ENCODE measurements at regions of chr2 and their contacts with region 1.

Region 1: GRCh38 chr2:170873035-170873692 is 55.9 kb upstream of the GORASP2 start:
- DNase-seq: peak; percentile 56 to 70 (median 65)
- H3K4me3 ChIP-seq: no peak overlapping the region
- H3K4me3 Mint-ChIP-seq: peak overlapping the region; percentile 59 to 88 (median 80)
- H3K27ac ChIP-seq: no peak overlapping the region
- H3K27ac Mint-ChIP-seq: peak overlapping the region in 4 of 7 donors; percentile 19 to 84 (median 68)
- H3K4me1 ChIP-seq: peaks cover 12% of the 10 kb centered on the region
- H3K4me1 Mint-ChIP-seq: peaks cover 7 to 14% (median 11%) of the 10 kb centered on the region in 4 donors
- H3K27me3 ChIP-seq: no peaks in the 10 kb centered on the region
- H3K27me3 Mint-ChIP-seq: peaks cover 4 to 9% of the 10 kb centered on the region in 2 donors

Region 2: DNA sequence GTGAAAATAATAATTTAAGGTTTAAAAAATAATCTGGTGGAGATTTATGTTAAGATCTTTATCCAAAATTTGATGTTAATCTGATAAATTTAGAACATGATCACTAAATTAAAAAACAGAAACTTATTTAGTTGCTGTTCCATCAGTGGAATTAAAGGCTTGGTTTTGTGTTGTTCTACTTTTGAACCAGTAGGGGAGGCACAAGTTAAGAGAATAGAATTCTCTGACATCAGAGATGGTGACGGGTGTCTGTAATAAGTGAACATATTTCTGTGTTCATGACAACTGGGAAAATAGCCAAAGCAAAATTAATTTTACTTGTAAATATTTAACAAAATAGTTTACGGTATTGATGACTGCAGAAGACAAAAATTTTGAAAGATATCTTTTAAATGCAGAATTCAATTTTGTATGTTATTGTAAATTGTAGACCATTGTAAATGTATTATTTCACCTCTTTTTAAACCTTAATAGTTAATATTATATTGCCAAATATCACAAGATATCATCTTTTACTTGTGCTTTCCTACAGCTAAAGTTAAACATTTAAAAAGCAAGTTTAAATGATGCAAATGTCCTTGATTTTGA is 939.9 kb before region 1 on chr2:
- CTCF ChIA-PET with region 1: no interaction called
- POLR2A ChIA-PET with region 1: no interaction called
- intact Hi-C with region 1: loop called (anchors 10 kb)
- DNase-seq: peak in 1 of 5 donors; percentile 6
- H3K4me3 ChIP-seq: no peak overlapping the region
- H3K4me3 Mint-ChIP-seq: no peak overlapping the region
- H3K27ac ChIP-seq: no peak overlapping the region
- H3K27ac Mint-ChIP-seq: no peak overlapping the region
- H3K4me1 ChIP-seq: no peaks in the 10 kb centered on the region
- H3K4me1 Mint-ChIP-seq: peaks cover 0 to 4% (median 0%) of the 10 kb centered on the region in 4 donors
- H3K27me3 ChIP-seq: no peaks in the 10 kb centered on the region
- H3K27me3 Mint-ChIP-seq: no peaks in the 10 kb centered on the region

Region 3: DNA sequence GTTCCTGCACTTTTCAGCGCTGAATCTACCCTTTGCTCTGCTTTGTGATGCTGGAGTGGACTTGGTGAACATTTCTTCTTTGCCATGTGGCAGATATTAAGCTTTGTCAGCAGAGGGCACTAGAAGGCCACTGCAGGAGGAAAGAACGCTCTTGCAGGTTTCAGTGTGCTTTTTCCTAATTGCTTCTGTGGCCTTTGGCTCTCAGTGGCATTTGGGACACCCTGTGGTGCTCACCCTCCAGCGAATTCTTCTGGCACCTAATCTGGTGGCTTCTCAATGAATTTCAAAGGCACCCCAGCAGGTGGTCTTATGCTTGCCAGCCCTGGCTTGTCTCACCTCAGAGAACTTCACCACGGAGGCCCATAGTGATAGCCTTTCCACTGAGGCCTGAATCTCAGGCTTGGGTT is 548.5 kb before region 1 on chr2:
- CTCF ChIA-PET with region 1: interaction called, 6 read pairs
- POLR2A ChIA-PET with region 1: no interaction called
- intact Hi-C with region 1: loop called (anchors 1 kb)
- DNase-seq: peak in 4 of 5 donors; percentile 14 to 28 (median 18)
- H3K4me3 ChIP-seq: no peak overlapping the region
- H3K4me3 Mint-ChIP-seq: no peak overlapping the region
- H3K27ac ChIP-seq: no peak overlapping the region
- H3K27ac Mint-ChIP-seq: no peak overlapping the region
- H3K4me1 ChIP-seq: no peaks in the 10 kb centered on the region
- H3K4me1 Mint-ChIP-seq: no peaks in the 10 kb centered on the region
- H3K27me3 ChIP-seq: no peaks in the 10 kb centered on the region
- H3K27me3 Mint-ChIP-seq: peaks cover 1 to 6% of the 10 kb centered on the region in 2 donors

Region 4: DNA sequence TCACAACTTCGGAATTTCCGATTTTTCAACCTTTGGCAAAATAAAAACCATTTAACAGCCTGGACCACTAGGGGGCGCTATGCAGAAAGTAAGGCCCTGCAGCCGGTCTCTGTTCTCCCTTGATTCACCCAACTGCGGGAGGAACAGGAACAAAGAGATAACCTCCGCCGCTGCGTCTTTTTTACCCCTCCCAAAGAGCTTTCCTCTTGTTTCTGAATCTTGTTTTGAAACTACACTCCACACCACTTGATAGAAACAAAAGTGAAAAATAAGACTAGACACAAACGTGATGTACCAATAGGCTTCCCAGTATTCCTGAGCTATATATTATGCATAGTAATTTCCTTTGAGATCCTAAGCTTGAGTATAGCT is 464.0 kb before region 1 on chr2:
- CTCF ChIA-PET with region 1: interaction called, 21 read pairs
- POLR2A ChIA-PET with region 1: no interaction called
- intact Hi-C with region 1: loop called (anchors 1 kb)
- DNase-seq: peak; percentile 52 to 69 (median 62)
- H3K4me3 ChIP-seq: no peak overlapping the region
- H3K4me3 Mint-ChIP-seq: peak overlapping the region; percentile 2 to 79 (median 52)
- H3K27ac ChIP-seq: no peak overlapping the region
- H3K27ac Mint-ChIP-seq: peak overlapping the region in 2 of 7 donors; percentile 27 to 91
- H3K4me1 ChIP-seq: peaks cover 7% of the 10 kb centered on the region
- H3K4me1 Mint-ChIP-seq: peaks cover 3 to 7% (median 6%) of the 10 kb centered on the region in 4 donors
- H3K27me3 ChIP-seq: peaks cover 13% of the 10 kb centered on the region
- H3K27me3 Mint-ChIP-seq: peaks cover 17 to 33% of the 10 kb centered on the region in 2 donors

Region 5: DNA sequence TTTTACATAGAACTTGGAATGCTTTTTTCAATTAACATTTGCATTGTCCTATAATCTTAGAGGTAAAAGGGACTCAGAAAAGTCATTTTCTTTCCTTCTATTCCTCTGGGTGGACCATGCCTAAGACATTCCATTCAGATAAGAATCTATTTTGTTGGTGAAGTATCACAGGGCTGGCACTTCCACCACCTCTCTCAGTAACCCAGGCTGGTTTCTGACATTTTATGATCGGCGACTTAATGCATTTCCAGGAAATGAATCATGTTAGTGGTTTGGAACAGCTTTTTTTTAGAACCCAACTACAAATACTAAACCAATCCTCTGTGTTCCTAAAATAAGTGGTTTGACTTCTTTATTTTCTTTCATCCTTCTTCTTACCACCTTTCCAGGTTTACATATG is 29.5 kb before region 1 on chr2:
- CTCF ChIA-PET with region 1: interaction called, 12 read pairs
- POLR2A ChIA-PET with region 1: no interaction called
- intact Hi-C with region 1: no loop called
- DNase-seq: no peak
- H3K4me3 ChIP-seq: no peak overlapping the region
- H3K4me3 Mint-ChIP-seq: peak overlapping the region in 2 of 8 donors; percentile 8 to 54
- H3K27ac ChIP-seq: no peak overlapping the region
- H3K27ac Mint-ChIP-seq: peak overlapping the region in 1 of 7 donors; percentile 3
- H3K4me1 ChIP-seq: peaks cover 10% of the 10 kb centered on the region
- H3K4me1 Mint-ChIP-seq: peaks cover 6 to 15% (median 11%) of the 10 kb centered on the region in 4 donors
- H3K27me3 ChIP-seq: no peaks in the 10 kb centered on the region
- H3K27me3 Mint-ChIP-seq: peaks cover 3 to 6% of the 10 kb centered on the region in 2 donors

Region 6: DNA sequence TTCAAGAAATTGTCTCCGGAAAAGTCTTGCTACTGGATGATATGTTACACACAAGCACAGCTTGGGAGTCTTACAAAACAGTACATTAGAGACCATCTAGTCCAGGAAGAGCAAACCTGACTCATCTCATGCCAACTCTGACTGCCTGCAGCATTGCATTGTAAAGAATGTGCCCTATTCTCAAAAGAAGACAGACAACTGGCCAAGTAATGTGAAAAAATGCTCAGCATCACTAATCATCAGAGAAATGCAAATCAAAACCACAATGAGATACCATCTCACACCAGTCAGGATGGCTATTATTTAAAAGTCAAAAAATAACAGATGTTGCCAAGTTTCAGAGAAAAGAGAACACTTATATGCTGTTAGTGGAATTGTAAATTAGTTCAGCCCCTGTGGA is 13.2 kb after region 1 on chr2:
- CTCF ChIA-PET with region 1: interaction called, 51 read pairs
- POLR2A ChIA-PET with region 1: no interaction called
- intact Hi-C with region 1: no loop called
- DNase-seq: no peak
- H3K4me3 ChIP-seq: no peak overlapping the region
- H3K4me3 Mint-ChIP-seq: no peak overlapping the region
- H3K27ac ChIP-seq: no peak overlapping the region
- H3K27ac Mint-ChIP-seq: no peak overlapping the region
- H3K4me1 ChIP-seq: no peaks in the 10 kb centered on the region
- H3K4me1 Mint-ChIP-seq: no peaks in the 10 kb centered on the region
- H3K27me3 ChIP-seq: no peaks in the 10 kb centered on the region
- H3K27me3 Mint-ChIP-seq: peaks cover 10 to 15% of the 10 kb centered on the region in 2 donors

Region 7: DNA sequence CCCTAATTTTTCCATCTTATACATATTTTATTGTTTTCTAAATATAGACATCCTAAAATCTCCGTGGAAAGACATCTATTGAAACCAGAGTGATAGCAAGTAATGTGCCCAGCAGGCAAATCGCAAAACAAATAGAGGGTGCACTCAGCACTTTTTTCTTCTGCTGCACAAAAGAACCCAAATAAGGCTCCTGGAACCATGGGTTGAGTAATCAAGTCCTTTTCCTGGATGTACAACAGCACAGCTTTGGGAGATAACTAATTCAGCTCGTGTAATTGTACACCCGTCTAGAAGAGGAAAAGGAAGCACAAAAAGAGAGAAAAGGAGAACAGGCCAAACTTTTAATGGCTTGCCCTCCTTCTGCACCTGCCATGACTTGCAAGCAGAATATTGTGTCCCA is 414.4 kb after region 1 on chr2:
- CTCF ChIA-PET with region 1: no interaction called
- POLR2A ChIA-PET with region 1: no interaction called
- intact Hi-C with region 1: no loop called
- DNase-seq: no peak
- H3K4me3 ChIP-seq: no peak overlapping the region
- H3K4me3 Mint-ChIP-seq: no peak overlapping the region
- H3K27ac ChIP-seq: no peak overlapping the region
- H3K27ac Mint-ChIP-seq: no peak overlapping the region
- H3K4me1 ChIP-seq: no peaks in the 10 kb centered on the region
- H3K4me1 Mint-ChIP-seq: no peaks in the 10 kb centered on the region
- H3K27me3 ChIP-seq: no peaks in the 10 kb centered on the region
- H3K27me3 Mint-ChIP-seq: peaks cover 0 to 1% of the 10 kb centered on the region in 2 donors